ENCODE measurements at regions of chr15 and their contacts with region 1.

Region 1: DNA sequence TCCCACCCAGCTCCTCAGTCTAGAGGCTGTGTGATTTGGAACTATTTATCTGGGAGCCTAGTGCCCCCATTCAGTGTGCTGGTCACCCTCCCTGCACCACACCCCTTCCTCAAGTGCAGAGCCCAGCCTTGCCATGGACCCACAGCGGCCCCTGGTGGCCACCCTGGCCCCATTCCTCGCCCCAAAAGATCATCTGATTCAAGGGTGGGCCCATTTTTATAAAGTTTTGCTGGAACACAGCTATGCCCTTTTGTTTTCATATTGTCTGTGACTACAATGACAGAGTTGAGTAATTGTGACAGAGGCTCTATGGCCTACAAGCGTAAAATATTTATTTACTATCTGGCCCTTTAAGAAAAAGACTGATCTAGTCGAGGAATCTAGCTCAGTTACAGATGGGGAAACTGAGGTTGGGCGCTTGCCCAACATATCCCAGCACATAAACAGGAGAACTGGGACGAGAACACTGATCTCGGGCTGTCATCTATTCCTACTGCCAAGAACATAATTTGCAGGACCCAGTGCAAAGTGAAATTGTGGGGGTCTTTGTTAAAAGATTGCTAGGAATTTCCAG is 1.8 kb downstream of the FES start:
- DNase-seq: peak; percentile 78
- ATAC-seq: peak; percentile 69
- H3K4me3 Mint-ChIP-seq: peak overlapping the region; percentile 71
- H3K27ac Mint-ChIP-seq: peak overlapping the region; percentile 76
- H3K4me1 Mint-ChIP-seq: peaks cover 34% of the 10 kb centered on the region
- H3K27me3 Mint-ChIP-seq: no peaks in the 10 kb centered on the region
- CTCF ChIP-seq: peak; percentile 90

Region 2: GRCh38 chr15:90482124-90483011 is 403.8 kb before region 1 on chr15:
- CTCF ChIA-PET with region 1: interaction called, 10 read pairs
- POLR2A ChIA-PET with region 1: no interaction called
- intact Hi-C with region 1: no loop called
- DNase-seq: no peak
- ATAC-seq: no peak
- H3K4me3 Mint-ChIP-seq: no peak overlapping the region
- H3K27ac Mint-ChIP-seq: no peak overlapping the region
- H3K4me1 Mint-ChIP-seq: peaks cover 48% of the 10 kb centered on the region
- H3K27me3 Mint-ChIP-seq: no peaks in the 10 kb centered on the region
- CTCF ChIP-seq: no peak

Region 3: DNA sequence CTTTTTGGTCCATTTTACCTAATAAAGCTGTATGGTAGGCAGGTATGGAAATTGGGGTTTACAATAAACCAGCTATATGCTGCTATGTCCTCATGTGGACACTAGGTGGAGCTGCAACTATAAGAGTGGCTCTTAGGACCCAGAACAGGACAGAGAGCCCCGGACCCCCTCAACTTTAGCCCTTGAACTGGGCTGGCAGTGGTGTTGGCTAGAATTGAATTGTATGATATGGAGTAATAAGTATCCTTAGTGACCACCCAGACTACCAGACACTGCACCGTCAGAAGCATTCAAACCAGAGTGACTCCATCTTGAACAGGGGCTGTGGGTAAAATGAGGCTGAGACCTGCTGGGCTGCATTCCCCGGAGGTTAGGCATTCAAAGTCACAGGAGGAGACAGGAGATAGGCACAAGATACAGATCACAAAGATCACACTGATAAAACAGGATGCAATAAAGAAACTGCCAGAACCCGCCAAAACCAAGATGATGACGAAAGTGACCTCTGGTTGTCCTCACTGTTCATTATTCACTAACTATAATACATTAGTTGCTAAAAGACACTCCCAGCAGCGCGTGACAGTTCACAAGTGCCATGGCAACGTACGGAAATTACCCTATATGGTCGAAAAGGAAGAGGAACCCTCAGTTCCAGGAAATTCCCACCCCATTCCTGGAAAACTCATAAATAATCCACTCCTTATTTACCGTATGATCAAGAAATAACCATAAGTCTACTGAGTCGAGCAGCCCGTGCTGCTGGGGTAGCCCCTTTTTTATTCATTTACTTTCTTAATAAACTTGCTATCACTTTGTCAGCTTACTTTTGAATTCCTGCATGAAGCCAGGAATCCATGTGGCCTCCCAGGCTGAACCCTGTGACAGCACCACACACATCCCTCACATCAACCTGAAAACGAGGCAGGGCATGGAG is 237.7 kb before region 1 on chr15:
- CTCF ChIA-PET with region 1: interaction called, 121 read pairs
- POLR2A ChIA-PET with region 1: interaction called, 14 read pairs
- intact Hi-C with region 1: loop called (anchors 1 kb)
- DNase-seq: no peak
- ATAC-seq: peak; percentile 93
- H3K4me3 Mint-ChIP-seq: peak overlapping the region; percentile 39
- H3K27ac Mint-ChIP-seq: peak overlapping the region; percentile 43
- H3K4me1 Mint-ChIP-seq: peaks cover 7% of the 10 kb centered on the region
- H3K27me3 Mint-ChIP-seq: peaks cover 4% of the 10 kb centered on the region
- CTCF ChIP-seq: no peak

Region 4: GRCh38 chr15:90780916-90781315 is 105.2 kb before region 1 on chr15:
- CTCF ChIA-PET with region 1: interaction called, 3 read pairs
- POLR2A ChIA-PET with region 1: interaction called, 9 read pairs
- intact Hi-C with region 1: loop called (anchors 1 kb)
- DNase-seq: no peak
- ATAC-seq: peak; percentile 31
- H3K4me3 Mint-ChIP-seq: peak overlapping the region; percentile 12
- H3K27ac Mint-ChIP-seq: peak overlapping the region; percentile 28
- H3K4me1 Mint-ChIP-seq: peaks cover 35% of the 10 kb centered on the region
- H3K27me3 Mint-ChIP-seq: no peaks in the 10 kb centered on the region
- CTCF ChIP-seq: no peak

Region 5: GRCh38 chr15:90851114-90851513 is 35.0 kb before region 1 on chr15:
- CTCF ChIA-PET with region 1: interaction called, 8 read pairs
- POLR2A ChIA-PET with region 1: interaction called, 7 read pairs
- intact Hi-C with region 1: loop called (anchors 5 kb)
- DNase-seq: no peak
- ATAC-seq: no peak
- H3K4me3 Mint-ChIP-seq: peak overlapping the region; percentile 53
- H3K27ac Mint-ChIP-seq: no peak overlapping the region
- H3K4me1 Mint-ChIP-seq: peaks cover 57% of the 10 kb centered on the region
- H3K27me3 Mint-ChIP-seq: no peaks in the 10 kb centered on the region
- CTCF ChIP-seq: no peak

Region 6: DNA sequence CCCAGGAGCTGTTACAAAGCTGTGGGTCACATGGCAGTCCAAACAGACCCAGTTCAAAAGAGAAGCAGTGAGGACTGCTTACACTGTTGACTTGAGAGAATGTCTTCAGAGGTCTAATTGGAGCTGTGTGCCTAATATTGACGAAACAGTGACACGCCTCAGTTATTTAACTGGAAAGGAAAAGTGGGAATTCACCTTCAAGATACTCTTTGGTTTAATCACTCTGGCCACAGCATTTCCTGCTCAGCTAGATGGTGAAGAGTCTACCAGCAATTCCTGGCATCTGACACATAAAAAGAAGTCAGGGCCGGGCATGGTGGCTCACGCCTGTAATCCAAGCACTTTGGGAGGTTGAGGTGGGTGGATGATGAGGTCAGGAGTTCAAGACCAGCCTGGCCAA is 540.3 kb after region 1 on chr15:
- CTCF ChIA-PET with region 1: no interaction called
- POLR2A ChIA-PET with region 1: no interaction called
- intact Hi-C with region 1: no loop called
- DNase-seq: no peak
- ATAC-seq: no peak
- H3K4me3 Mint-ChIP-seq: no peak overlapping the region
- H3K27ac Mint-ChIP-seq: no peak overlapping the region
- H3K4me1 Mint-ChIP-seq: no peaks in the 10 kb centered on the region
- H3K27me3 Mint-ChIP-seq: peaks cover 2% of the 10 kb centered on the region
- CTCF ChIP-seq: no peak

Region 7: DNA sequence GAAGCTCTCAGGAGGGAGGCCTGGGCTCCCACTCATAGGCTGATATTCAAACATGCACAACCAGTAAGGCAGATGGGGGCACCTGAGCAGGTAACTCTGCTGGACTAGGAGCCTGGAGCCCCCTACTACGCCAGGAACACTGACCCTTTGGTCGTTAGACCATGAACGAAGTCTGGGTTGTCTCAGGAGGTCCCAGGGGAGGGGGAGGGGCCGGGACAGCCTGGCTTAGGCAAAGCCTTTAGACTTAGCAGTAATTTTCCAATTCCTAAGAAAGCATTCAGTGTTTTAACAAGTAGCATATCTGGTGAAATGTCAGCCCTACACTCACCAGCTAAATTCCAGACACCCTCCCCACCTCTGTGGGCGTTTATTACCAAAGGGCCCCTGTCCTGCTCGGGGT is 1440.1 kb after region 1 on chr15:
- CTCF ChIA-PET with region 1: no interaction called
- POLR2A ChIA-PET with region 1: no interaction called
- intact Hi-C with region 1: no loop called
- DNase-seq: no peak
- ATAC-seq: no peak
- H3K4me3 Mint-ChIP-seq: no peak overlapping the region
- H3K27ac Mint-ChIP-seq: no peak overlapping the region
- H3K4me1 Mint-ChIP-seq: no peaks in the 10 kb centered on the region
- H3K27me3 Mint-ChIP-seq: peaks cover 2% of the 10 kb centered on the region
- CTCF ChIP-seq: no peak

Measured in activated B cell treated with CpG ODN at 0.5 μM for 24 hours (primary cell).